CD4-positive, alpha-beta memory T cell (primary cell): ENCODE measurements at regions of chr7 and their contacts with region 1.

Region 1: DNA sequence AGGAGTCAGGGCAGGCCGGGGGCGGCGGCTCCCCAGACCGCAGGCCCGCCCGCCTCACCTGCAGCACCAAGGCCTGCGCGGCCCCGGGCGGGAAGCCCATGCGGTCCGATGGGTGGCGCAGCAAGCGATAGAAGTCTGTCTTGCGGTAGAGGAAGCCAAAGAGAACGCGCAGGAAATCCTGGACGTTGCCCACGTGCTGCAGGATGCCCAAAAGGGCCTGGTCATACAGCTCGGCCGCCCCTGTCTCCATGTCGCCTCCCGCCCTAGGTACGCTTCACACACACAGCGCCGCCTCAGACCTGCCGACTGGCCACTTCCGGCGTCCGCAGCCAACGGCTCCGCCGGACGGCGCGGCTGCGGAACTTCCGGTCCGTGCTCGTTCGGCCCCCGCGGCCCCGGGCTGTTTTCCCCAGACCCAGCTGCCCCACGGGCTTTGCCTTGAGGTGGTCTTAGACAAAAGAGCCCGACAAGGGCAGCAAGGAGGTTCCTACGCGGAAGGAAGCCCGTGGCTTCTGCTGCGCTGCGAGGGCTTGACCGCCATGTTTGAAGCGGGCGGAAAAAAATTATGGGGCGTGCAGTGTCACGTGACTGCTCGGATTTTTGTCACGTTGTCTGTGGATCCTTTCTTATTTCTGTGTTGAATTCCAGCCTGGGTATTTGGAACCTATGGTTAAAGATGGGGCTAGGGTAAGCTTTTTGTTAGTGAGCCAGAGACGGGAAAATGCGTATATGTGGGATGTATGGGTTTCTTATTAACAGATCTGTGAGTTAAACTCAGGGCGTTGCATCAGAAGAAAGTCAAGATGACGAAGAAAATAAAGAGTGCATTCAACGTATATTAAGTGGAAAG is at the start of gene NUDCD3:
- DNase-seq: peak; percentile 81 to 84 (median 83)
- H3K4me3 ChIP-seq: peak within 1 kb of the TSS; percentile 90 to 96
- H3K4me3 Mint-ChIP-seq: peak within 1 kb of the TSS; percentile 84 to 99 (median 93)
- H3K27ac ChIP-seq: peak within 1 kb of the TSS; percentile 93
- H3K27ac Mint-ChIP-seq: peak within 1 kb of the TSS; percentile 77 to 98 (median 96)
- H3K4me1 ChIP-seq: peaks cover 44% of the 10 kb centered on the region
- H3K4me1 Mint-ChIP-seq: peaks cover 37 to 52% (median 42%) of the 10 kb centered on the region in 4 donors
- H3K27me3 ChIP-seq: no peaks in the 10 kb centered on the region
- H3K27me3 Mint-ChIP-seq: no peaks in the 10 kb centered on the region
- total RNA-seq, gene NUDCD3: 100 to 108 TPM

Region 2: DNA sequence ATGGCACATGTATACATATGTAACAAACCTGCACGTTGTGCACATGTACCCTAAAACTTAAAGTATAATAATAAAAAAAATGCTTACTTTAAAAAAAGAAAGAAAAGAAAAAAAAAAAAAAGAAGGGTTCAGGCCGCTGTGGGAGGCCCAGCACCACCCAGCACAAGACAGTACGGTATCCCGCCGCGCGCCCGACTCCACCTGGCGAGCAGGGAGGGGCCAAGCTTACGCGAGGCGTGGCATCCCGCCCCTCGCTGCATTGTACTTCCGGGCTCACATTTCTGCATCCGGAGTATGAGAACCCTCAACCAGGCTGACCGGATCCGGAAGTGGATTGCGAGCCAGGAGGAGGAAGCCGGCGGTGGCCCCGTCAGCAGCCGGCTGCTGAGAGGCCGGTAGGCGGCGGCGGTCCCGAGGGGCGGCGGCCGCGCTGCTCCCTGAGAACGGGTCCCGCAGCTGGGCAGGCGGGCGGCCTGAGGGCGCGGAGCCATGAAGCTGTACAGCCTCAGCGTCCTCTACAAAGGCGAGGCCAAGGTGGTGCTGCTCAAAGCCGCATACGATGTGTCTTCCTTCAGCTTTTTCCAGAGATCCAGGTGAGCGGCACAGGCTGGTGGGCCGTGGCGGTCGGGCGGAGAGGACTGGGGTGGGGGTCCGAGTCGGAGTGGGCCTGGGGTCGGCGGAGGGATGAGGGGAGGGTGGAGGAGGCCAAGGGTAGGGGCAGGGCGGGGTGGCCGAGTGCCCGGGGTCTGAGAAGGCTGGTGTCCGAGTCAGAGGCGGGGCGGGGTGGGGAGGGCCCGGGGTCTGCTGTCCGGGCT is 289.7 kb before region 1 on chr7 and contains the start of gene YKT6:
- CTCF ChIA-PET with region 1: interaction called, 4 read pairs
- POLR2A ChIA-PET with region 1: interaction called, 13 read pairs
- intact Hi-C with region 1: loop called (anchors 1 kb)
- DNase-seq: peak; percentile 91 to 96 (median 93)
- H3K4me3 ChIP-seq: peak within 1 kb of the TSS; percentile 12 to 84
- H3K4me3 Mint-ChIP-seq: peak within 1 kb of the TSS; percentile 77 to 90 (median 85)
- H3K27ac ChIP-seq: peak within 1 kb of the TSS; percentile 71
- H3K27ac Mint-ChIP-seq: peak within 1 kb of the TSS; percentile 49 to 88 (median 70)
- H3K4me1 ChIP-seq: peaks cover 17% of the 10 kb centered on the region
- H3K4me1 Mint-ChIP-seq: peaks cover 25 to 40% (median 35%) of the 10 kb centered on the region in 4 donors
- H3K27me3 ChIP-seq: no peaks in the 10 kb centered on the region
- H3K27me3 Mint-ChIP-seq: peaks cover 8 to 9% of the 10 kb centered on the region in 2 donors
- total RNA-seq, gene YKT6: 62.7 to 63.2 TPM

Region 3: DNA sequence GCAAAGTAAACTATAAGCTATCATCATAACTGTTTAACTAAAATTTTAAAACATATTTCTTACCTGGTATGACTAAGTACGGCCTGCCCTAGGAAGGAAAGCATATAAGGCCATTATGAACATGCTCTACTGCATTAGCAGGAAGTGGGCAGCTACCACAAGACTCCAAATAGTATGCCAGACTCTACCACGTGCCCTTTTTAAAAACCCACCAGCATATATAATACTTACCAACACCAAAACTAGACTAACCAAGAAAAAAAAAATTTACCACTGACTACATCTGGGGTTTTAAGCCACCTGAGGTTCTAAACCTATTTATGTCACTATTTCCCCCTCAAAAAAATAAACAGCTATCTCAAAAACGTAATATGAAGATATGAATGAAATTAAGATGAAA is 30.3 kb before region 1 on chr7:
- CTCF ChIA-PET with region 1: interaction called, 6 read pairs
- POLR2A ChIA-PET with region 1: interaction called, 37 read pairs
- intact Hi-C with region 1: loop called (anchors 1 kb)
- DNase-seq: peak; percentile 87 to 90 (median 87)
- H3K4me3 ChIP-seq: no peak overlapping the region
- H3K4me3 Mint-ChIP-seq: peak overlapping the region; percentile 1 to 80 (median 60)
- H3K27ac ChIP-seq: peak overlapping the region; percentile 22
- H3K27ac Mint-ChIP-seq: peak overlapping the region; percentile 76 to 93 (median 89)
- H3K4me1 ChIP-seq: peaks cover 73% of the 10 kb centered on the region
- H3K4me1 Mint-ChIP-seq: peaks cover 50 to 82% (median 68%) of the 10 kb centered on the region in 4 donors
- H3K27me3 ChIP-seq: no peaks in the 10 kb centered on the region
- H3K27me3 Mint-ChIP-seq: no peaks in the 10 kb centered on the region

Region 4: DNA sequence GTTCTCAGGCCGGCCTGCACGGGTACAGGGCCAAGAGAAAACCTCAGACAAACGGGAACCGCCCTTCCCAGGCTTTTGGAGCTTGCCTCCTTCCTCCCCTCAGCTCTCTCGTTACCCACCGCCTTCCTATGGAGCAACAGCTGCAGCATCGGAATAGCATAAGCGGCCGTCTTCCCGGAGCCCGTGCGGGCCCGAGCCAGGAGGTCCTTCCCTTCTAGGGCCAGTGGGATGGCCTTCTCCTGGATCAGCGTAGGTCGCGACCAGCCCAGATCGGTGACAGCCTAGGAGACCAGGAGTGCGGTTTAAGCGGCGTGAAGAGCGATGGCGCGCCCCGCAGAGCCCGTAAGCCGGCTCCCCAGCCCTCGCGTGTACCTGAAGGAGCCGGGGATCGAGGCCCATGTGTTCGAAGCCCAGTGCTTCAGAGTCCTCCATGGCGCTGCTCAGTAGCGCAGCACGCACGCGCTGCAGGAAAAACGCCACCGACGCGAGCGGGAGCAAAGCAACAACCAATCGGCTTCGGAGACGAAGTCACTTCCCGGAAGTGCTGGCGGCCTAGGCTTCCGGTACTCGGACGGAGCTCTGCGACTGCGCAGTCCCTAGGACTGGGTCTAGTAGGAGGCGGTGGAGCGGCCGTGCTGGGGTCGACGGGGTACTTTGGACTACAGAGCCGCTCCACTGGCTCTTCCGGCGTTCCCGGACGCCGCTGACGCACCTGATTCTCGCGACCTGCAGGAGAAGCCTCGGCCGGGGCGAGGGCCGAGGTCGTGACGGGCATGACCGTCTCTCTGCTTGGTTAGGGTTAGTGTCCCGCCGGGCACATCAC is 83.1 kb after region 1 on chr7 and contains the start of gene DDX56:
- CTCF ChIA-PET with region 1: interaction called, 3 read pairs
- POLR2A ChIA-PET with region 1: interaction called, 24 read pairs
- intact Hi-C with region 1: loop called (anchors 2 kb)
- DNase-seq: peak; percentile 87 to 93 (median 88)
- H3K4me3 ChIP-seq: peak within 1 kb of the TSS; percentile 93
- H3K4me3 Mint-ChIP-seq: peak within 1 kb of the TSS; percentile 94 to 99 (median 96)
- H3K27ac ChIP-seq: peak within 1 kb of the TSS; percentile 94
- H3K27ac Mint-ChIP-seq: peak within 1 kb of the TSS; percentile 97 to 99 (median 99)
- H3K4me1 ChIP-seq: peaks cover 30% of the 10 kb centered on the region
- H3K4me1 Mint-ChIP-seq: peaks cover 26 to 41% (median 34%) of the 10 kb centered on the region in 4 donors
- H3K27me3 ChIP-seq: no peaks in the 10 kb centered on the region
- H3K27me3 Mint-ChIP-seq: no peaks in the 10 kb centered on the region
- total RNA-seq, gene DDX56: 109 to 114 TPM

Region 5: GRCh38 chr7:44885394-44886317 is 395.1 kb after region 1 on chr7 and contains the start of gene PURB:
- CTCF ChIA-PET with region 1: no interaction called
- POLR2A ChIA-PET with region 1: interaction called, 3 read pairs
- intact Hi-C with region 1: loop called (anchors 1 kb)
- DNase-seq: peak; percentile 97 to 99 (median 98)
- H3K4me3 ChIP-seq: peak within 1 kb of the TSS; percentile 68 to 99
- H3K4me3 Mint-ChIP-seq: peak within 1 kb of the TSS; percentile 92 to 99 (median 95)
- H3K27ac ChIP-seq: peak within 1 kb of the TSS; percentile 96
- H3K27ac Mint-ChIP-seq: peak within 1 kb of the TSS; percentile 99 to 100 (median 100)
- H3K4me1 ChIP-seq: peaks cover 56% of the 10 kb centered on the region
- H3K4me1 Mint-ChIP-seq: peaks cover 24 to 67% (median 37%) of the 10 kb centered on the region in 4 donors
- H3K27me3 ChIP-seq: no peaks in the 10 kb centered on the region
- H3K27me3 Mint-ChIP-seq: no peaks in the 10 kb centered on the region
- total RNA-seq, gene PURB: 26.6 to 27.4 TPM